Motor neuron (in vitro differentiated cells): ENCODE measurements at regions of chr1 and their contacts with region 1.

Region 1: DNA sequence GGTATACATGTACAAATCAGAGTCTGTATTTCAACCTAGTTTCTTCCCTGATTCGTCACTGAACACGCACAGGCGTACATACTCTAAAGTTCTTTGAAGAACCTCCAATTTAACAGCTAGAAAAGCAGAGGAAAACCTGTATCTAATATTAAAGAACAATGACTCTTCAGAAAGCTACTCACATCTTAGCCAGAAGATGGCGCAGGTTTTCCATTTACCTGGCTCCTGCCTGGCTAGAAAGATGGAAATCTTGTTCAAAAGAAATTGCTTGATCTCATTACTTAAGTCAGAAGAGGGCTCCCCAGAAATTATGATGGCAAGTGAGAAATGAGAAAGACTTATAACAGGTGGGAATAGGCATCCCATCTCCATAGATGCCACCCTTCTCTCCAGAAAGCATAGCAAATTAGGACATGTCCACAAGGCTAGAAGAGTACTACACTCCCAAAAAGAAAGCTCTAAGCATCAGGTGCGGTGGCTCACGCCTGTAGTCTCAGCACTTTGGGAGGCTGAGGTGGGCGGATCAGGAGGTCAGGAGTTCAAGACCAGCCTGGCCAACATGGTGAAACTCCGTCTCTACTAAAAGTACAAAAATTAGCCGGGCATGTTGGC is 19.0 kb upstream of the L1TD1 start:
- ATAC-seq: peak; percentile 38 to 64 (median 50)
- H3K4me3 ChIP-seq: no peak overlapping the region
- H3K27ac ChIP-seq: no peak overlapping the region
- H3K4me1 ChIP-seq: peaks cover 3 to 8% of the 10 kb centered on the region in 2 donors

Region 2: DNA sequence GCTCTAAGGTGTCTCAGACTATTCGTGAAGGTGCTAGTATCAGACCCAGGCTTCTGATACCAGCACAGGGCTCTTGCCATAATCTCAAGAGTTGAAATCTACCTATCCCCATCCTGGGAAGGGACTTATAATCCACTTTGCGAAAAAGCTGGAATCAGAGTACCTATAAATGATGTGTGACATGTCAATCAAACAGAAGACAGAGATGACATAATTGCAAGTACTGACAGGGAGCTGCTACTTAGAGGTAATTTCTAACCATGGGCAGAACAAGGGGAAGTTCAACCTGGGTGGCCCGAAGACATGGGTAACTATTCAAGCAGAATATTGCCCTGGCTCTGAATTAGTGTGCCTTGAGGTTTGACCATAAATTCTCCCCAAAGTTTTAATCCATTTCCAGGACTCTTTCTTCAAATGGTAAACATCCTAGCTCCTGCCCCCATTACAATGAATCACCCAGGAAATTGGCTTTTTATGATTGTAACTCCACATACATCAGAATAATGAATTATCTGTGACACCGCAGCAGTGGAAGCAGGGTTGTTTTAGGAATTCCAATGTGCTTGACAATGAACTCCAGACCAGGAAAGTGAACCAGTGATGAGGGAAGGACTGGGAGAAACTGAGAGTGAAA is 106.4 kb after region 1 on chr1:
- in situ Hi-C with region 1: no loop called
- ATAC-seq: no peak
- H3K4me3 ChIP-seq: no peak overlapping the region
- H3K27ac ChIP-seq: no peak overlapping the region
- H3K4me1 ChIP-seq: peaks cover 50 to 64% of the 10 kb centered on the region in 2 donors

Region 3: DNA sequence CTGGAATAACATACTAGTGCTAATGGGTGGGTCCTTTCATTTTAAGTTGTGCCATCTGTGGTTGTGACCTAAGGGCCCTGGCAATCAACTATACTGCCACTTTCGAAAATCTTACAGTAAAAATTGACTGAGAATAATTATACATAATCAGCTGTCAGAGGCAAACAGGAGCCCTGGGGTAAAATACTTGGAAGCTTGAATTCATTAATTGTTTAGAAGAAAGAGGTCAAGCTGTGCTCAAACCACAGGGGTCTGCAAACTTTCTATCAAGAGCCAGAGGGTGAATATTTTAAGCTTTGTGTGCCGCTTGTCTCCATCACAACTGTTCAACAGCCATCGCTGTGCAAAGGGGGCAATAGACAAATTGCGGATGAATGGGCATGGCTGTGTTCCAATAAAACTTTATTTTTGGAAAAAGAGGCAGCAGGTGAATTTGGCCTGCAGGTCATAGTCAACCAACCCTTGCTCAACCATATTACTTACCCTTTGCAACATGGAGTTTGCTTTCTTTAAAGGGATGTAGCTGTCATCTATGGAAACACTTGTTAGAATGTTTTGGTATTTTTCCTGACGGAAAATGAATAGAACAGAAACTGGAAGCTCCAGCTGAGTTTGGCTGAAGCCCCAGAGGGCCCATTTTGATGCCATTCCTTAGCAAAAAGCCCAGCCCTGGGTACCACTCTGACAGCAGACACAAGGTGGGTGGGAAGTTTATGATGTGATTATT is 225.5 kb after region 1 on chr1:
- in situ Hi-C with region 1: loop called (anchors 5 to 25 kb)
- ATAC-seq: no peak
- H3K4me3 ChIP-seq: no peak overlapping the region
- H3K27ac ChIP-seq: no peak overlapping the region
- H3K4me1 ChIP-seq: no peaks in the 10 kb centered on the region